PC-3 (cell line): ENCODE measurements at regions of chr18 and their contacts with region 1.

Region 1: GRCh38 chr18:70172225-70172624 is 33.3 kb downstream of the RTTN start:
- DNase-seq: peak; percentile 30
- ATAC-seq: no peak
- H3K4me3 ChIP-seq: no peak overlapping the region
- H3K27ac ChIP-seq: no peak overlapping the region
- H3K4me1 ChIP-seq: no peaks in the 10 kb centered on the region
- H3K27me3 ChIP-seq: no peaks in the 10 kb centered on the region
- CTCF ChIP-seq: peak; percentile 69

Region 2: DNA sequence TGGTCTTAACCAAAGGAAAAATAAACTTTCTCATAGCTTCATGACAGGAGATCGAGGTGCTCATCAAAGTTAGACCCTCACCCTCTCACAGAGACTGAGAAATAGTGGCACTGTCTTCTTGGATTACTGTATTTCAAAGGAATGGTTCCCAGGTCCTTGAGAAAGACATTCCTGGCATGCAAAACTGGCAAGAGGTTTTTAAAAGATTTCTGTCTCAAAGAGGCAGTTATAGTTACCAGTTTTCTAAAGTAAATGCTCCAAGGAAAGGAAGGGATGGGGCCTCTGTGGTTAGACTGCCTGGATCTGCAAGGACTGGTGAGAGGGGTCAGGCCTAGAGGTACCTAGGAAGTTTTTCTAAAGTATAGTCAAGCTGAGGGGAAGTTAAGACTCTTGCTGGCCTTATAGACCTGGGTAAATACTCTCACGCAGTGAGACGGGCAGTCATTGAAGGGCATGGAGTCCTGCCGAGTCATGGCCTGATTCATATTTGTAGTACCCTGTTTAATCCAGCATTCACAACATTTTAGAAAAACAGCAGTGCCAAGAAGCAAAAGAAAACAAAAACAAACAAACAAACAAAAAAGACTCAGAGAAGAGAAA is 545.5 kb before region 1 on chr18:
- CTCF ChIA-PET with region 1: interaction called, 10 read pairs
- POLR2A ChIA-PET with region 1: no interaction called
- intact Hi-C with region 1: no loop called
- DNase-seq: no peak
- ATAC-seq: no peak
- H3K4me3 ChIP-seq: no peak overlapping the region
- H3K27ac ChIP-seq: no peak overlapping the region
- H3K4me1 ChIP-seq: no peaks in the 10 kb centered on the region
- H3K27me3 ChIP-seq: no peaks in the 10 kb centered on the region
- CTCF ChIP-seq: no peak

Region 3: DNA sequence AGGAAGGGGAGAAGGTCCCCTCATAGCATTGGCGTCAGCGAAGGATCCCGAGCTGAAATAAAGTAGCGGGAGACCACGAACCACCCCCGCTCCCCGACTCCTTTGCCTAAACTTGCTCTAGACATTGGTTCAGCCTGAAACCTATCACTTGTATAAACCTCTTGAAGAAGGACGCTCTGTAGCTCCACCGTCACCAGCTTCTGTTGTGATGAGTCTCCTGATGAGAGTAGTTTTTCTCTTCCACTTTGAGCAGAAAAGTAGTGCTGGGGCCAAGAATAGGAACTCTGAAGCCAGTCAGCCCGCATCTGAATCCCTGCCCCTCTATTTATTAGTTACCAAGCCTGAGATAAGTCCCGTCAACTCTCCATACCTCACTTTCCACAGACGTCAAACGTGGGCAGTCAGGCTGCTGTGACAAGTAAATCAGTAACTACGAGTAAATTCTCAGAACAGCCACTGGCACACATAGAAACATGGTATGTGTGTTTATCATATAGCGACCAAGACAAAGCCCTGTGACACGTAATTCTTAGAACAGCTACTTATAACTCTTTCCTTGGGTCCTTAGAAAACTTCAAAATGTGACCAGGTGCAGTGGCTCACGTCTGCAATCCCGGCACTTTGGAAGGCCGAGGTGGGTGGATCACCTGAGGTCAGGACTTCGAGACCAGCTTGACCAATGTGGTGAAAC is 286.2 kb before region 1 on chr18:
- CTCF ChIA-PET with region 1: no interaction called
- POLR2A ChIA-PET with region 1: no interaction called
- intact Hi-C with region 1: no loop called
- DNase-seq: no peak
- ATAC-seq: no peak
- H3K4me3 ChIP-seq: no peak overlapping the region
- H3K27ac ChIP-seq: no peak overlapping the region
- H3K4me1 ChIP-seq: no peaks in the 10 kb centered on the region
- H3K27me3 ChIP-seq: no peaks in the 10 kb centered on the region
- CTCF ChIP-seq: no peak

Region 4: DNA sequence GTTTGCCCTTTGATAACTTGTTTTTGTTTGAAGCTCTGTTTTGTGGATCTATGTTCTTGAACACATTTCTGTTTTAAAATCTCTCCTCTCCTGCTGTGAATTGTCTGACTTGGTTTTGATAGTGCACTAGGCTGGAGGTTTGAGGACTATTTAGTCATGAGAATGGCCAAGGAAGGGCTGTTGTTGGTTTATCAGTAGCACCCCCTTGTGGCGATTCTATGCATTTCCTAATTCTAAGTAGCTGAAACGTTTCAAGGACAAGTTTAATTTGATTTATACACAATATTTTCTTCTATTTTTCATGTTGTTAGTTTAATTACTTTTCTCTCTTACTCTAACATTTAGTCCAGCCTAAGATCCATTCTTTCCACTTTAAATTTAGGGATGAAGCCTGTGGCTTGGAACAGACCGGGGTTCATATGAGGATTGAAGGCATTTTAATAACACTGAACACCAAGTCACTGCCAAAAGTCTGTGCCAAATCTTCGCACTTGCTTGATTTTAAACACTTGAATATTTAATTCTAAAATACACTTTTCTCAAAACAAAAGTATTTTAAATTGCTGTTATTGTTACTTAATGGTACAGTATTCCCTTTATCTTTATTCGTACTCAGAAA is 282.6 kb after region 1 on chr18:
- CTCF ChIA-PET with region 1: interaction called, 3 read pairs
- POLR2A ChIA-PET with region 1: no interaction called
- intact Hi-C with region 1: loop called (anchors 1 kb)
- DNase-seq: peak; percentile 81
- ATAC-seq: peak; percentile 80
- H3K4me3 ChIP-seq: no peak overlapping the region
- H3K27ac ChIP-seq: no peak overlapping the region
- H3K4me1 ChIP-seq: no peaks in the 10 kb centered on the region
- H3K27me3 ChIP-seq: no peaks in the 10 kb centered on the region
- CTCF ChIP-seq: peak; percentile 90